Activated CD8-positive, alpha-beta T cell treated with anti-CD3 and anti-CD28 coated beads, Interleukin-2, amount 10 ng/mL, durations not matched to agents 7 days and 5 days (primary cell): ENCODE measurements at regions of chr6 and their contacts with region 1.

Region 1: GRCh38 chr6:17599885-17600526 is at the start of gene FAM8A1:
- DNase-seq: peak; percentile 97
- ATAC-seq: peak; percentile 85
- H3K4me3 Mint-ChIP-seq: peak within 1 kb of the TSS; percentile 82
- H3K27ac Mint-ChIP-seq: peak within 1 kb of the TSS; percentile 89
- H3K4me1 Mint-ChIP-seq: peaks cover 41% of the 10 kb centered on the region
- H3K27me3 Mint-ChIP-seq: no peaks in the 10 kb centered on the region
- total RNA-seq, gene FAM8A1: 6.2 TPM

Region 2: DNA sequence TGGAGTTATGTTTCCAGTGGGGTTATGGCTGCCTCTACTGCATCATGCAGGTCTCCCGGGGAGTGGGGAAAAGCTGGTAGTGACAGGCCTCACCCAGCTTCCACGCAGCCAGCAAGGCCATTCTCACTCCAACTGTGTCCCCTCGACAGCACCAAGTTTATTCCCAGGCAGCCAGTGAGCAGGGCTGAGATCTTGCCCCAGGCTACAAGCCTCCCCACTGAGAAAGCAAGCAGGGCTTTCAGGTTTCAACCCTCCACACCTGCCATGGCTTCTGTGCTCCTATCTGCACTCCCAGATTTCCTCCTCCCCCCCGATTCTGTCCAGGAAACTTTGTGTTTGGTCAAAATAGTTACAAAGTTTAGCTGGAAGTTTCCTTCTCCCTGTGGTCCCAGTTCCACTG is 454.8 kb before region 1 on chr6:
- CTCF ChIA-PET with region 1: no interaction called
- POLR2A ChIA-PET with region 1: no interaction called
- DNase-seq: no peak
- ATAC-seq: no peak
- H3K4me3 Mint-ChIP-seq: no peak overlapping the region
- H3K27ac Mint-ChIP-seq: no peak overlapping the region
- H3K4me1 Mint-ChIP-seq: no peaks in the 10 kb centered on the region
- H3K27me3 Mint-ChIP-seq: no peaks in the 10 kb centered on the region

Region 3: DNA sequence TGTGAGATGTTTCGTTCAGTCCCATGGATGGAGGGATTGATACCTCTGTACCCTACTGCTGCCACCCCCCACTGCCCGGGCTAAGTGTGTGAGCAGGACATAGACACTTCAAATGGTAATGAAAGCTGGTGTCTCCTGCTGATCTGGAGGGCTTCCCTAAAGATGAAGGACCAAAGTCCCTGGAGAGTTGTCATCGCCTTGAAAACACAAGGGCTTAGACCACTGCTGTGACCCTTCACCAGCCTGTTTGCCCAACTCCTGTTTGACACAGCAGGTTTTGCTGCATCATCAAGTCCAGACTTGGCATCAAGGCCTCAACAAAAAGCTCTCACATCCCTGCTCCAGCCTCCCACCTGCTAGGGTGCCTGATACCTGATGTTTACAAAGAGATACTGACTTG is 57.8 kb before region 1 on chr6:
- CTCF ChIA-PET with region 1: no interaction called
- POLR2A ChIA-PET with region 1: no interaction called
- DNase-seq: no peak
- ATAC-seq: no peak
- H3K4me3 Mint-ChIP-seq: no peak overlapping the region
- H3K27ac Mint-ChIP-seq: no peak overlapping the region
- H3K4me1 Mint-ChIP-seq: no peaks in the 10 kb centered on the region
- H3K27me3 Mint-ChIP-seq: peaks cover 2% of the 10 kb centered on the region

Region 4: GRCh38 chr6:17584241-17584803 is 15.7 kb before region 1 on chr6:
- CTCF ChIA-PET with region 1: interaction called, 10 read pairs
- POLR2A ChIA-PET with region 1: interaction called, 10 read pairs
- DNase-seq: peak; percentile 30
- ATAC-seq: peak; percentile 62
- H3K4me3 Mint-ChIP-seq: no peak overlapping the region
- H3K27ac Mint-ChIP-seq: no peak overlapping the region
- H3K4me1 Mint-ChIP-seq: peaks cover 10% of the 10 kb centered on the region
- H3K27me3 Mint-ChIP-seq: peaks cover 10% of the 10 kb centered on the region

Region 5: DNA sequence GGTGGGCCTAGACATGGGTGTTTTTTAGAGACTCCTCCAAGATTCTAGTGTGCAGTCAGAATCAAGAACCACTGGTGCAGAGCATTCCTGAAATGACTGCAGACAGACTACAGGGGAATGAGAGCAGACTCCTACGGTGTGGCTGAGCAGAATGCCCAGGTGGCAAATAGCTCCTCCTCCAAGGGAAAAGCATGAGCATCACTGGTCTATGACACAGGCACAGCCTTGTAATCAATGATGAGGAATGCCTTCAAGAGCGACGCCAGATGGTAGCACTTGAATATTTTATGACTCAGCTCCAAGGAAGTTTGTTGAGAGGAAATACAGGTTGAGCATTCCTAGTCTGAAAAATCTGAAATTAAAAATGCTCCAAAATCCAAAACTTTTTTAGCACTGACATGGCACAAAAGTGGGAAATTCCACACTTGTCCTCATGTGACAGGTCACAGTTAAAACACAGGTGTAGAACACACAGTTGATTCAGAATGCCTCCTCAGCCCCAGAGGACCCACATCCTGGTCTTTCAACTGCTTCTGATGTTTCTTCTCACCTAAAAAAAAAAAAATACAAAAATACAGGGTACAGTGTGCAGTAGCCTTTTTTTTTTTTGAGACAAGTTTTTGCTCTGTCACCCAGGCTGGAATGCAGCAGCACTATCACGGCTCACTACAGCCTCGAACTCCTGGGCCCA is 10.5 kb before region 1 on chr6:
- CTCF ChIA-PET with region 1: interaction called, 10 read pairs
- POLR2A ChIA-PET with region 1: interaction called, 10 read pairs
- DNase-seq: no peak
- ATAC-seq: peak; percentile 45
- H3K4me3 Mint-ChIP-seq: no peak overlapping the region
- H3K27ac Mint-ChIP-seq: no peak overlapping the region
- H3K4me1 Mint-ChIP-seq: peaks cover 19% of the 10 kb centered on the region
- H3K27me3 Mint-ChIP-seq: no peaks in the 10 kb centered on the region

Region 6: DNA sequence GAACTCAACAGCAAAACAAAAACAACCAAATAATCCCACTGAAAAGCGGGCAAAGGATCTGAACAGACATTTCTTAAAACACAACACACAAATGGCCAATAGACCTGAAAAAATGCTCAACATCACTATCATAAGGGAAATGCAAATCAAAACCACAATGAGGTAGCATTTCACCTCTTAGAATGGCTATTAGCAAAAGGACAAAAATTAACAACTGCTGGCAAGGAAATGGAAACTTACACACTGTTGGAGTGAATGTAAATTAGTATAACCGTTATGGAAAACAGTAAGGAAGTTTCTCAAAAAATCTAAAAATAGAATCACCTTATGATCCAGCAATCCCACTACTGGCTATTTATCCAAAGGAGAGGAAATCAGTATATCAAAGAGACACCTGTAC is 21.0 kb after region 1 on chr6:
- CTCF ChIA-PET with region 1: no interaction called
- POLR2A ChIA-PET with region 1: no interaction called
- DNase-seq: no peak
- ATAC-seq: no peak
- H3K4me3 Mint-ChIP-seq: no peak overlapping the region
- H3K27ac Mint-ChIP-seq: no peak overlapping the region
- H3K4me1 Mint-ChIP-seq: peaks cover 22% of the 10 kb centered on the region
- H3K27me3 Mint-ChIP-seq: no peaks in the 10 kb centered on the region

Region 7: DNA sequence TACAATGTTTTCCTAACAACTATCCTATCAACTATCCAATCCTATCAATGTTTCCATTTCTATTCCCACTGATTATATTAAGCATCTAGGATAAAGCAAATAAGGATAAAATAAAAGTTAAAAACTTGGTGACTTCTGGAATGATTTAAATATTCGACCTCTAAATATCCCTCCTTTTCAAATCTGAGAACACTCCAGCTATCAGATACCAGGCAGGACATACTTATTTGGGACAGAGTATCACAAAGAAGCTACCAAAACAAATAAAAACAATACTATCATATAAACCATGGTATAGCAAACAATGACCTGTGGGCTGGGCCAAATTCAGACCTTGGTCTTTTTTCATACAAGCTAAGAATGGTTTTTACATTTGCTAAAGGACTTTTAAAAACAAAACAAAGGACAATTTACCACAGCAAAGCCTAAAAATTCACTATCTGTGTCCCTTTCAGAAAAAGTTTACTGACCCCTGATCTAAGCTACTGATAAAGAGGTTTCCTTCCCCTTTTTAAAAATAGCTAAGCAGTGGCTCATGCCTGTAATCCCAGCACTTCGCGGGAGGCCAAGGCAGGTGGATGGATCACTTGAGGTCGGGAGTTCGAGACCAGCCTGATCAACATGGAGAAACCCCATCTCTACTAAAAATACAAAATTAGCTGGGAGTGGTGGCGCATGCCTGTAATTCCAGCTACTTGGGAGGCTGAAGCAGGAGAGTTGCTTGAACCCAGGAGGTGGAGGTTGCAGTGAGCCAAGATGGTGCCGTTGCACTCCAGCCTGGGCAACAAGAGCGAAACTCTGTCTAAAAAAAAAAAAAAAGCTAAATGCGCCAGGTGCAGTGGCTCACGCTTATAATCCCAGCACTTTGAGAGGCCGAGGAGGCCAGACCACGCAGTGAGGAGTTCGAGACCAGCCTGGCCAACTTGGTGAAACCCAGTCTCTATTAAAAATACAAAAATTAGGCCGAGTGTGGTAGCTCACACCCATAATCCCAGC is 100.7 kb after region 1 on chr6:
- CTCF ChIA-PET with region 1: interaction called, 6 read pairs
- POLR2A ChIA-PET with region 1: interaction called, 39 read pairs
- DNase-seq: no peak
- ATAC-seq: no peak
- H3K4me3 Mint-ChIP-seq: no peak overlapping the region
- H3K27ac Mint-ChIP-seq: peak overlapping the region; percentile 46
- H3K4me1 Mint-ChIP-seq: peaks cover 51% of the 10 kb centered on the region
- H3K27me3 Mint-ChIP-seq: no peaks in the 10 kb centered on the region

Region 8: GRCh38 chr6:17706580-17707370 is 106.8 kb after region 1 on chr6 and contains the start of gene NUP153:
- CTCF ChIA-PET with region 1: interaction called, 6 read pairs
- POLR2A ChIA-PET with region 1: interaction called, 39 read pairs
- DNase-seq: peak; percentile 99
- ATAC-seq: peak; percentile 74
- H3K4me3 Mint-ChIP-seq: peak within 1 kb of the TSS; percentile 85
- H3K27ac Mint-ChIP-seq: peak within 1 kb of the TSS; percentile 96
- H3K4me1 Mint-ChIP-seq: peaks cover 30% of the 10 kb centered on the region
- H3K27me3 Mint-ChIP-seq: no peaks in the 10 kb centered on the region
- total RNA-seq, gene NUP153: 72.2 to 73.6 TPM